Heart right ventricle (tissue), 16 donors: ENCODE measurements at regions of chr17 and their contacts with region 1.

Region 1: DNA sequence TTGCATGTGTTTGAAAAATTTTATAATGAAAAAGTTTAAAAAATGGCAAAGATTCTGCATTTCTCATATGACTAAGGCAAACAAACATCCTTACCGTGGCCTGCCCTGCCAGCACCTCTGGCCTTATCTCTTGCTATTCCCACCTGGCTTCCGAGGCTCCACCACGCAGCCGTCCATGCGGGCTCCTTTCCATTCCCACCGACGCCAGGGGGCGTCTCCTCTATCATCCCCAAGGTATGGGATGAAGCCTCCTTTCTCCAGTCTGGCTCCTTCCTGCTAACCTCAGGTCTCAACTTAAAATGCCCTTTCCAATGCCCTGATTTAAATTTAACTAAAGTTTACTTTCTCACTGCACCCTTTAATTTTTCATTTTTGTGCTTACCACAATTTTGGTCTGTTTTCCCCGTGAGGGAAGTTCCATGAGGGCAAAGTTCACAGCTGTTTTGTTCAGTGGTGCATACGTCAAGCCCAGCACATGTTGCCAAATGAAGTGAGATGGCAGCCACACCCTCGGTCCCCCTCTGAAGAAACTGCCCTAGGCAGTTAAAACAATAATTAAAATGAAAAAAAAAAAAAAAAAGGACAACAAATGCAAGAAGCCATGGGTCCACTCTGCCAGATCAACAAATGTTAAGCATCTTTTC is 13.3 kb upstream of the SDK2 start:
- DNase-seq: peak; percentile 41 to 63
- ATAC-seq: peak in 5 of 8 donors; percentile 55 to 71 (median 67)
- H3K4me3 ChIP-seq: no peak overlapping the region
- H3K27ac ChIP-seq: no peak overlapping the region
- H3K4me1 ChIP-seq: peaks cover 0 to 9% (median 0%) of the 10 kb centered on the region in 9 donors
- H3K27me3 ChIP-seq: peaks cover 0 to 18% (median 9%) of the 10 kb centered on the region in 7 donors
- CTCF ChIP-seq: peak in 7 of 9 donors; percentile 51 to 70 (median 67)

Region 2: DNA sequence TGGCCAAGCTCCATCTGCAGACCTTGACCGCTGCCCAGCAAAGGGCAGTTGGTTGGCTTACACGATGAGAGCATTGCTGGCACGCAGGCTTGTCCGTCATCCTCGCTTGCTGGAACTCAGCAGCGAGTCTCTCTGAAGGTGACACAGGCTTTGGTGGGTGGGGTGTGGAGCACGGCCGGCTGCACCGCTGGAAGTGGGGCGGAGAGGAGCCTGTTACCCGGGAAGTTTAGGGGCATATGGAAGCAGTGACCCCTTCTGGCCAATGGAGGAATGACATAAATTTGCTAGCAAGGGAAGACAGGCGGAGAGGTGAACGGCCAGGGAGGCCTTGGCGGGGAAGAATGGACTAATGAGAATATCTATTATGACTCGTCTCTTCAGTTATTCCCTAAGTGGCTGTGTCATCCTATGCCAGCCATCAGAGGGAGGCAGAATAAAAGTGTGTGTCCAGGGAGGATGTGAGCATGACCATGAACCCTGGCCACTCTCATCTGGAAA is 52.5 kb after region 1 on chr17:
- intact Hi-C with region 1: loop called in 1 of 10 experiments (anchors 10 kb)
- DNase-seq: peak; percentile 60 to 72
- ATAC-seq: peak; percentile 82 to 97 (median 94)
- H3K4me3 ChIP-seq: no peak overlapping the region
- H3K27ac ChIP-seq: no peak overlapping the region
- H3K4me1 ChIP-seq: peaks cover 0 to 10% (median 5%) of the 10 kb centered on the region in 9 donors
- H3K27me3 ChIP-seq: peaks cover 0 to 50% (median 20%) of the 10 kb centered on the region in 7 donors
- CTCF ChIP-seq: peak; percentile 67 to 89 (median 82)

Region 3: GRCh38 chr17:73833775-73834488 is 176.3 kb after region 1 on chr17:
- intact Hi-C with region 1: loop called in 1 of 10 experiments (anchors 10 kb)
- DNase-seq: no peak
- ATAC-seq: no peak
- H3K4me3 ChIP-seq: no peak overlapping the region
- H3K27ac ChIP-seq: no peak overlapping the region
- H3K4me1 ChIP-seq: no peaks in the 10 kb centered on the region
- H3K27me3 ChIP-seq: peaks cover 0 to 50% (median 44%) of the 10 kb centered on the region in 7 donors
- CTCF ChIP-seq: no peak

Region 4: GRCh38 chr17:73855720-73856333 is 198.2 kb after region 1 on chr17:
- intact Hi-C with region 1: loop called in 1 of 10 experiments (anchors 10 kb)
- DNase-seq: peak in 1 of 2 donors; percentile 9
- ATAC-seq: peak in 4 of 8 donors; percentile 54 to 75 (median 62)
- H3K4me3 ChIP-seq: no peak overlapping the region
- H3K27ac ChIP-seq: peak overlapping the region in 1 of 10 donors; percentile 15
- H3K4me1 ChIP-seq: peaks cover 0 to 11% (median 0%) of the 10 kb centered on the region in 9 donors
- H3K27me3 ChIP-seq: peaks cover 0 to 13% (median 4%) of the 10 kb centered on the region in 7 donors
- CTCF ChIP-seq: no peak

Region 5: DNA sequence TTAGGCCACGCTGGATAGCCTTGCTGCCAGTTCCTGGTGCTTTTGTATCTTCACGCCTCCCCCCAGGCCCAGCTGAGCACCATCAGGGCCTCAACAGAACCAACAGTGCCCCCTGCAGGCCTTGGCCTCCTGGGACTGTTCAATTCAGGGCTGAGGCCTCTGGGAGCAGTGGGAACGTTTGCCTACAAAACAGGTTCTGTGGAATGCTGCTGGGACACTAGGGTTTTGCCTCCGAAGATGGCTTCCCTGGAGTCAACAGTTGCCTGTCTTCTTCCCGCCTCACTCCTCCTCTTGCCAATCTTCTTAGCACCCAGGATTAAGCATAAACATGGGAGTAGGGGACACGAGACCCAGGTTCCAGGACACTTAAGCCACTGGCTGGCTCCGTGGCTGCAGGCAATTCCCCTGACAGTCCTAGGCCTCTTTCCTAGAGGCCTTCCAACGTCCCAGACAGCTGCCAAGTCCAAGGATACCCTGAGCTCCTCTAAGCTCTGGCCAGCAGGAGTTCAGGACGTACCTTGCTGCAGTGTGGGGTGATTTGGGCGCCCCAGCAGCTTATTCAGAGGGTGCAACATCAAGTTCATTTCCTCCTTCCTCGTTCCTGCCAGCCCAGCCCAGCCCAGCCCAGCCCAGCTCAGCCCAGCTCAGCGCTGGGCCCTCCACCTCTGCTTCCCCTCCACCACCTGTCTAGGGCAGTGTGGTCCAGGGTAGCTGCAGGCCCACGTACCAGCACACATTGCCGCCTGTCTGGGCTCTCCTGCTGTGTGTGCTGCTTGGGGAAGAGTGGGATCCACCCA is 299.3 kb after region 1 on chr17:
- intact Hi-C with region 1: loop called in 8 of 10 experiments (anchors 2 to 10 kb)
- DNase-seq: peak; percentile 17 to 41
- ATAC-seq: peak in 3 of 8 donors; percentile 25 to 45 (median 30)
- H3K4me3 ChIP-seq: no peak overlapping the region
- H3K27ac ChIP-seq: no peak overlapping the region
- H3K4me1 ChIP-seq: peaks cover 6 to 12% (median 11%) of the 10 kb centered on the region in 9 donors
- H3K27me3 ChIP-seq: peaks cover 0 to 41% (median 20%) of the 10 kb centered on the region in 7 donors
- CTCF ChIP-seq: peak in 7 of 9 donors; percentile 45 to 58 (median 52)

Region 6: DNA sequence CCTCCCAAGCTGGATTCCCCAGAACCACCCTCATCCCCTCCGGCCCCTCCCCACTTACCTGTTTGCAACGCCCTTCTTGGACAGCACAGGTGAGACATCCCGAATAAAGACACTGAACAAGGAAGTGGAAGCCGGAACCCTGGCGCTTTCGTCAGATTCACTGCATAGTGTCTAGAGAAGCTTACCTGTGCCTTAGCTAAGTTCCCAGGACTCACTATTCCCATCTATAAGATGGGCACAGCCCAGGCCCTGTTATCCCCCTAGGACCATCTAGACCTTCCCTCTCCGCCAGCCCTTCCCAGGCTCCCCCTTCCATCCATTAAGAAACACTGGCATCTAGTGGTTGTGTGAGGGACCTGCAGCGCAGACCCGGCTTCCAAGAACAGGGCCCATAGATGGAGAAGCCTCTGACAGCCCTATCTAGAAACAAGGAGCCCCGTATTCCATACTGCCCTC is 519.0 kb after region 1 on chr17:
- intact Hi-C with region 1: loop called in 4 of 10 experiments (anchors 5 to 10 kb)
- DNase-seq: peak; percentile 44 to 51
- ATAC-seq: peak; percentile 76 to 91 (median 86)
- H3K4me3 ChIP-seq: no peak overlapping the region
- H3K27ac ChIP-seq: no peak overlapping the region
- H3K4me1 ChIP-seq: no peaks in the 10 kb centered on the region
- H3K27me3 ChIP-seq: peaks cover 0 to 69% (median 59%) of the 10 kb centered on the region in 7 donors
- CTCF ChIP-seq: peak; percentile 60 to 83 (median 77)